ENCODE measurements at regions of chr15 and their contacts with region 1.

Region 1: DNA sequence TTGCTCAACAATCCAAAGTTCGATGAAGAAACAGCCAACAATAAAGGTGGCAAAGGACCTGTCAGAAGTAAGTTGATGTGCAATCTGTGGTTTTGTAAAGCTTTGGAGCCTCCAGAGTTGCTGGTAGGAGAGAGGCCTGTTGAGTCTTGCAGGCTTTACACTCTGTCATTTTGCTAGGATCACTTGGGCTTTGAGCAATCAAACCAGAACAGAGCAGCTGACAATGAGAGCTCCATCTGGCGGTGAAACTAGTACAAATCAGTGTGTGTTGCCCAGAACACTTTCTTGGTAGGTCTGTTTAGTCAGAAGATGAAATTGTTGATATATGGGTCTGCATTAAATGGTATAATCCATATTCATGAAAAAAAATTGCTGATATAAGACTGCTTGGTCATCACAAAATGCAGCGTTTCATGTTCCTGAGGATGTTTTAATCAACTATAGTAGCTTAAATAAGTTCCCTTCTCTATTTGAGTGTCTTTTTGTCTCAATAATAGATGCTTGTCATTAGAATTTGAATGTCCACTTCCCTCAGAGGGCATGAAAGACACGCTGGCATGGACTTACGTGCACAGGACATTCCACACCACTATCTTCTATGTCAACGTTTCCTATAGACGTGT is 25.7 kb downstream of the TMOD2 start:
- DNase-seq: peak; percentile 44
- ATAC-seq: peak; percentile 90 to 94

Region 2: GRCh38 chr15:51649659-51650521 is 127.2 kb before region 1 on chr15:
- intact Hi-C with region 1: loop called (anchors 1 to 5 kb)
- DNase-seq: no peak
- ATAC-seq: peak; percentile 72 to 83

Measured in left cardiac atrium (tissue), 4 donors.